ENCODE measurements at regions of chr5 and their contacts with region 1.

Region 1: DNA sequence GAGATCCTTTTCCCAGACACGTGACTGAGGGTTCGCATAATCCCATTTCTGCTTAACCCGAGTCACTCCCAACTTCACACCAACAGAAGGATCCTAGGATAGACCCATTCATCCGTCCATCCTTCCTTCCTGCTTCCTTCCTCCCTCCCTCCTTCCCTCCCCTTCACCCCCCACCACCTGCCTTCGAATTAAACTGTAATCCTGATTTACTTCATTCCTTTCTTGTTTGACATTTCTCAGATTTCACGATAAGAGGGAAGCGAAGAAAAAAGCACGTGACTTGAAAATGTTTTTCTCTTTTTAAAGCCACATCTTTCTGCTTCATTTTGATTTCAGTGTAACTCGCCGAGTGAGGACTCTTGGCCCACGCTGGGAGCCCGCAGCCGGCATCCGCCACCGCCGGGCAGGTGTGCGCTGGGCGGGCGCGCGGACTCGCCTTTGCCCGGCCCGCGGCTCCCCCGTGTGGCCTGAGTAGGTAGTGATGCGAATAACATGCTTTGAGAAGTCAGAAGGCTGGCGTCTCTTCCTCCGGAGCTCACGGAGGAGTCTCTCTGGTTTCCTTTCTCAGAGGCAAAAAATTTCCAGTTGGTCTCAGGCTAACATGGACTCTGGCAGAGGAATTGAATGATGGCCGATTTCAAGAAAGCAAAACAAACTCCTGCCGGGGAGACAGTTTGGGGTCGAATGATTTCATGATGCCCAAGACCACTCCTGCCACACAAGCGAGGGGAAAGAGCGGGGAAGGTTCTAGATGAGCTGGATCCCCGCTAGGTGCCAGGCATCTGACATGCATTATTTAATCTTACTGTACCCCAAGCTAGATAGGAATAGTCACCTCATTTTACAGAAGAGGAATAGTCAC is 117.7 kb downstream of the SLC12A2 start:
- DNase-seq: peak; percentile 89
- H3K4me3 ChIP-seq: peak overlapping the region in 1 of 4 donors; percentile 36
- H3K27ac ChIP-seq: no peak overlapping the region
- H3K4me1 ChIP-seq: peaks cover 0 to 20% (median 7%) of the 10 kb centered on the region in 4 donors
- H3K27me3 ChIP-seq: no peaks in the 10 kb centered on the region
- CTCF ChIP-seq: peak; percentile 85 to 91 (median 89)
- EP300 ChIP-seq: no peak
- POLR2A ChIP-seq: no peak

Region 2: DNA sequence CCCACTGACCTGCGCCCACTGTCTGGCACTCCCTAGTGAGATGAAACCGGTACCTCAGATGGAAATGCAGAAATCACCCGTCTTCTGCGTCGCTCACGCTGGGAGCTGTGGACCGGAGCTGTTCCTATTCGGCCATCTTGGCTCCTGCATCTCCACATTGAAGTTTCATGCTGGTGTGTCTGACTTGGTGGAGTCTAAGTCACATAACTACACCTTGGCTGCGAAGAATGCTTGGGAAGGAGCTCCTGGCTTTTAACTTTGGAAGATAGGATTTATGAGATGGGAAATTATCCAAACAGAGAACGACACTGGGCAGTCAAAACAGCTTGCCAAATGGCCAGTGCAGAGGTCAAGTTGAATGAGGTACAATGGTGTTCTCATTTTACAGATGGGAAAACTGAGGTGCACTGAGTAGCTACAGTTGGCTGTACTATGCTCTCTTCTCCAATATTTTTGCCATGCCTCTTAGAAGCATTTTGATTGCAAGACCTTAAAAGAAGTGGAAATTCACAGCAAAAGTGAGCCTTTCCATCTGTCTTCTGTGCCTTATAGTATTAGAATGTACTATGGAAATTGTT is 461.4 kb before region 1 on chr5:
- in situ Hi-C with region 1: loop called in 1 of 4 experiments (anchors 10 kb)
- intact Hi-C with region 1: loop called (anchors 5 kb)
- DNase-seq: no peak
- H3K4me3 ChIP-seq: no peak overlapping the region
- H3K27ac ChIP-seq: no peak overlapping the region
- H3K4me1 ChIP-seq: no peaks in the 10 kb centered on the region
- H3K27me3 ChIP-seq: no peaks in the 10 kb centered on the region
- CTCF ChIP-seq: no peak
- EP300 ChIP-seq: no peak
- POLR2A ChIP-seq: no peak

Region 3: DNA sequence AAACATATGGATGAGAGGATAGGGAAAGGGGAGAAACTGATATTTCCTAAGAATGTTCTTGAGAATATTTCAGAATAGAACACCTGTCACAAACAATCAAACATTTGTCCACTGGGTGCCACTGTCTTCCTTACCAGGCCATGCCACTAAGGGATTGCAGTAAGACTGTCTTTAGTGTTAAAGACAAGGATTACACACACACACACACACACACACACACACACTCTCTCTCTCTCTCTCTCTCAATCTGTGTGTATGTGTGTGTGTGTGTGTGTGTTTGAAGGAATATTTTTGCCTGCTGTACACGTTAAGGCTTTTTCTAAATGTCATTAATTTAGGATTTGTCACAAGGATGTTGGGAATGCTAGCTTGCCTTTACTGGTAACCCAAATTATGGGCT is 443.7 kb before region 1 on chr5:
- in situ Hi-C with region 1: loop called in 3 of 4 experiments (anchors 10 to 25 kb)
- intact Hi-C with region 1: no loop called
- DNase-seq: peak; percentile 39
- H3K4me3 ChIP-seq: no peak overlapping the region
- H3K27ac ChIP-seq: peak overlapping the region in 3 of 4 donors; percentile 51 to 69 (median 57)
- H3K4me1 ChIP-seq: peaks cover 0 to 41% (median 22%) of the 10 kb centered on the region in 4 donors
- H3K27me3 ChIP-seq: no peaks in the 10 kb centered on the region
- CTCF ChIP-seq: peak; percentile 32 to 69 (median 48)
- EP300 ChIP-seq: no peak
- POLR2A ChIP-seq: no peak

Region 4: GRCh38 chr5:127997201-127997704 is 204.0 kb before region 1 on chr5:
- in situ Hi-C with region 1: no loop called
- intact Hi-C with region 1: no loop called
- DNase-seq: no peak
- H3K4me3 ChIP-seq: no peak overlapping the region
- H3K27ac ChIP-seq: peak overlapping the region in 1 of 4 donors; percentile 18
- H3K4me1 ChIP-seq: peaks cover 0 to 15% (median 7%) of the 10 kb centered on the region in 4 donors
- H3K27me3 ChIP-seq: no peaks in the 10 kb centered on the region
- CTCF ChIP-seq: no peak
- EP300 ChIP-seq: no peak
- POLR2A ChIP-seq: no peak

Region 5: DNA sequence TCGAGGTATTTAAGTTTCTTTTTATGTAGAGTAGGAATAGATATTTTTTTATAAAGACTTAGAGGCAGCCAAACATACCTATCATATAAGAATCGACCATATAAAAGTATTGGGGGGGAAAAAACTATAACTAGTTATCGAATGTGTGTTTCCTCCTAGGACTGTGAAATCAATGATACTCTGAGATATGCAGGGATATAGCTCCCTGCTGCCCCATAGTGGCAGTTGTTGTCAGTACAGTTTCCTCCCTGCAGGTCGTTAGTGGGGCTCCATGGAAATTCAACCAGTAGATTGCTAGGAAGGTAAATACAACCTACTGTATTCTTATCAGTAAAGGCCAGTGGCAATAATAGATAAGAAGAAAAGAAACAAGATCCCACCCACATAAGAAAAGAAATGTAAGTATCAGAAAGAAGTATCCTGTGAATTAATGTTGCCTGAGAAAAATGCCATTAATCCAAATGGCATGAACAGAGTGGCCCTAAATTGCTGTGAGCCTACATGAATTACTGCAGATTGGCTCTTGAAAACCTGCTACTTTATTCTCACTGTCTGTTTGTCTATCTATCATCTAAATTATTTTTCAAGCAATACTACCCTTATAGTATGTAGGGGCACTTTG is 473.6 kb after region 1 on chr5:
- in situ Hi-C with region 1: loop called in 1 of 4 experiments (anchors 25 kb)
- intact Hi-C with region 1: no loop called
- DNase-seq: peak; percentile 52
- H3K4me3 ChIP-seq: no peak overlapping the region
- H3K27ac ChIP-seq: no peak overlapping the region
- H3K4me1 ChIP-seq: no peaks in the 10 kb centered on the region
- H3K27me3 ChIP-seq: no peaks in the 10 kb centered on the region
- CTCF ChIP-seq: peak; percentile 37 to 64 (median 48)
- EP300 ChIP-seq: no peak
- POLR2A ChIP-seq: no peak

Region 6: GRCh38 chr5:129767906-129768380 is 1566.6 kb after region 1 on chr5:
- in situ Hi-C with region 1: loop called in 1 of 4 experiments (anchors 25 kb)
- intact Hi-C with region 1: no loop called
- DNase-seq: peak; percentile 68
- H3K4me3 ChIP-seq: no peak overlapping the region
- H3K27ac ChIP-seq: no peak overlapping the region
- H3K4me1 ChIP-seq: peaks cover 0 to 3% (median 0%) of the 10 kb centered on the region in 4 donors
- H3K27me3 ChIP-seq: no peaks in the 10 kb centered on the region
- CTCF ChIP-seq: peak; percentile 93 to 97 (median 96)
- EP300 ChIP-seq: no peak
- POLR2A ChIP-seq: no peak